ENCODE measurements at regions of chr14 and their contacts with region 1.

Region 1: GRCh38 chr14:34649344-34649743 is 19.4 kb upstream of the SNX6 start:
- DNase-seq: peak; percentile 81
- H3K4me3 ChIP-seq: no peak overlapping the region
- CTCF ChIP-seq: no peak

Region 2: GRCh38 chr14:34502494-34503225 is 146.7 kb before region 1 on chr14:
- in situ Hi-C with region 1: no loop called
- DNase-seq: no peak
- H3K4me3 ChIP-seq: no peak overlapping the region
- CTCF ChIP-seq: no peak

Region 3: DNA sequence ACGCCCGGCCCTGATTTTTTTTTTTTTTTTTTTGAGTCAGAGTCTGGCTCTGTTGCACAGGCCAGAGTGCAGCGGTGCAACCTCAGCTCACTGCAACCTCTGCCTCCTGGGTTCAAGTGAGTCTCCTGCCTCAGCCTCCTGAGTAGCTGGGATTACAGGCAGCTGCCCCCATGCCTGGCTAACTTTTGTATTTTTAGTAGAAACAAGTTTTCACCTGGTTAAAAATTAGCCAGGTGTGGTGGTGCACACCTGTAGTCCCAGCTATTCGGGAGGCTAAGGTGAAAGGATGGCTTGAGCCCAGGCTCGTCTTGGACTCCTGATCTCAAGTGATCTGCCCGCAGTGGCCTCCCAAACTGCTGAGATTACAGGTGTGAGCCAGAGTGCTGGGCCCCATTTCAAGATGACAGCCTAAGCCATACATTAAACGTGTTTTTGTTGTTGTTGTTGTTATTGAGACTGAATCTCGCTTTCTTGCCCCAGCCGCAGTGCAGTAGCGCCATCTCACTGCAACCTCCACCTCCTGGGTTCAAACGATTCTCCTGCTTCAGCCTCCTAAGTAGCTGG is 67.1 kb before region 1 on chr14:
- in situ Hi-C with region 1: no loop called
- DNase-seq: no peak
- H3K4me3 ChIP-seq: no peak overlapping the region
- CTCF ChIP-seq: no peak

Region 4: DNA sequence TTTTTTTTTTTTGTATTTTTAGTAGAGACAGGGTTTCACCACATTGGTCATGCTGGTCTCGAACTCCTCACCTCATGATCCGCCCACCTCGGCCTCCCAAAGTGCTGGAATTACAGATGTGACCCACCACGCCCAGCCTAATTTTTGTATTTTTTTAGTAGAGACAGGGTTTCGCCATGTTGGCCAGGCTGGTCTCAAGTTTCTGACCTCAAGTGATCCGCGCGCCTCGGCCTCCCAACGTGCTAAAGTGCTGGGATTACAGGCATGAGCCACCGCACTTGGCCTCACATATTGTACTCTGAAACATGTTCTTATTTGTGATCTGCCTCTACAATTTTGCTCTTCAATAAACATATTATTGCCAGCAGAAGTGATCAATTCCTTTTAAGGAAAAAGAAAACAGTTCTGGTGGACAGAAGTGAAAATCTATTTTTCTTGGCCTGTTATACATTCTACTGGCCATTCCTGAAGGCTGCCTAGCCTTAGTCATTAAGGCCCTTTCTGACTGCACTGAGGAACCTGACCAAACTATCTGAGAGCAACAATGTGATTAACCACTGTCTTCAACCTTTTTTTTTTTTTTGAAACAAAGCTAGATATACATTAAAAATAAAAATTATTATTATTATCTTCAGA is 55.5 kb before region 1 on chr14:
- in situ Hi-C with region 1: loop called (anchors 10 kb)
- DNase-seq: peak; percentile 39
- H3K4me3 ChIP-seq: no peak overlapping the region
- CTCF ChIP-seq: no peak